Activated CD4-positive, alpha-beta memory T cell treated with anti-CD3 and anti-CD28 coated beads for 36 hours (primary cell): ENCODE measurements at regions of chr9 and their contacts with region 1.

Region 1: DNA sequence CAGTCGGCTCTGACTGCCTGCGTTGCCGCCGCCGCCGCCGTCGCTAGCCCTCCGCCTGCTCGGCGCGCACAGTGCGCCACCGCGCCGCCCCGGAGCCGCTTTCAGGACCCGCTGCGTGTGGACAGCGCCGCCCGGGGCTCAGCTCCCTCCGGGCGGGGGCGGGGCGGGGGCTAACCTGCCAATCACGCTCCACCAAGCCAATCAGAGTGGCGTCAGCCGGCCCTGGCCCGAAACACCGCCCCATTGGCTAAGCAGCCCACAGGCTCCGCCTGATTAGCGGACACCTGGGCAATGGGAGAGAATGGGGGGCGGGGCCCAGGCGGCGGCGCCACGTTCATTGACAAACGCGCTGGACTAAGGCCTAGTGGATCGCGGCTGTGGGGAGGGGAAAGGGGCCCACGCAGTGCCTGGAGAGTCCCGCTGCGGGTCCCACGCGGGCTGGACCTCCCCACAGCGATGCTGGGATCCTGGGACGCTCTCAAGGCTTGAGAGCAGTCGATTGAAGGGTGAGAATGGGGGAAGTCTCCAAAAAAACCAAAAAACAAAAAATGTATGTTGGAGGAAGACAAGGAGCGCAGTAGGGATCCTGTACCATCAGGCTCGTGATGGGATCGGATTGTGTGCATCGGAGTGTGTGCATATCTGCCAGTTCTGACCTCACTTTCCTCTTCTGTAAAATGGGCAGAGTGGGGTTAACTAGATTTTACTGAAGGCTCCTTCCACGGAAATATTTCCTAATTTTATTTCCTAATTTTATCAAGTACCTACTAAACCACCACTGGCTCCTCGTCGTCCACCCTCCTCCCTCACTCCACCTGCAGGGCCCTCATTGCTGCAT is 6.3 kb downstream of the PAX5 start:
- DNase-seq: peak; percentile 95
- H3K4me3 Mint-ChIP-seq: peak overlapping the region; percentile 62
- H3K27ac Mint-ChIP-seq: no peak overlapping the region
- H3K4me1 Mint-ChIP-seq: peaks cover 47% of the 10 kb centered on the region
- H3K27me3 Mint-ChIP-seq: peaks cover 87% of the 10 kb centered on the region

Region 2: DNA sequence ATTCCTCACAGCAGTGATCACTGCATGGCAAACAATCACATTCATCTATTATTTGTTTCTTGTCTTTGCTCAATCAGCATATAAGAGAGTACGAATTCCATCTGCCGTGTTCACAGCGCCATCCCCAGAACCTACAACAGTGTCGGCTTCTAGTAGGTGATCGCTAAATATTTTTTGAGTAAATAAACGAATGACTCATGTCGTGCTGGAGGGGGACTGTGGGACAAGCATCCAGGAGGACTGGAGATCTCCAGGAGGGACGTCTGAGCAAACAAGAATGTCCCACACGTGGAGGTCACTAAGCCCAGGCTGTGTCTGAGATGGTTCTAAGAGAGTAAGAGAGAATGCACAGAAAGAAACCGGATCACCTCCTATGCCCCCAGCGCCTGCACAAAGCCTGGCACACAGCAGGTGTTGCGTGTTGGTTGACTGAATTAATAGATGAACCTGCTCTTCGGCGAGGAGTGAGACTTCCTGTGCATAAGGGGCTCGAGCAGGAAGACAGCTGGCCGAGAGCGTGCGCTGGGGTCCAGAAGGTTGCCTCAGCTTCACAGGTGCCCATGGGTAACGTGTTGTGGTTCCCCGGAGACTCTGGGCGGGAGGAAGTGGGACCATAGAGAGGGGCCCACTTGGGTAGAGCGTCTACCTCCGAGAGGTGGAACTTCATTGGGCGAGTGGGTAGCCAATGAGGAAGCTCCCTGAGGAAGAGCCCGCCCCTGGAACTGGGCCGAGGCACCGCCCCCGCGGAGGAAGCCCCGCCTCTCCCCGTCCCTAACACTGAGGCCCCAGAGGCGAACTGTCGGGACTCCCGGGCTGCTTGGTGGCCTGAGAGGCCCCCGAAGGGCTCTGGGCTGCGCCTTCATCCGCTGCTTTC is 262.1 kb before region 1 on chr9:
- CTCF ChIA-PET with region 1: no interaction called
- POLR2A ChIA-PET with region 1: no interaction called
- intact Hi-C with region 1: loop called (anchors 5 kb)
- DNase-seq: peak; percentile 94
- H3K4me3 Mint-ChIP-seq: no peak overlapping the region
- H3K27ac Mint-ChIP-seq: no peak overlapping the region
- H3K4me1 Mint-ChIP-seq: no peaks in the 10 kb centered on the region
- H3K27me3 Mint-ChIP-seq: peaks cover 5% of the 10 kb centered on the region